Activated T-helper 1 cell treated with anti-CD3 and anti-CD28 coated beads, Interleukin-12 subunit alpha, Interleukin-12 subunit beta, Interleukin-2, Interleukin-4 antibody, amounts not matched to agents 30 ng/mL and 10 ng/mL and 1 ng/mL, durations not matched to agents 14 hours and 24 hours and 36 hours (primary cell): ENCODE measurements at regions of chr4 and their contacts with region 1.

Region 1: GRCh38 chr4:16026160-16026761 is 57.6 kb downstream of the PROM1 start:
- DNase-seq: peak; percentile 5
- H3K4me3 Mint-ChIP-seq: no peak overlapping the region
- H3K27ac Mint-ChIP-seq: no peak overlapping the region
- H3K4me1 Mint-ChIP-seq: no peaks in the 10 kb centered on the region
- H3K27me3 Mint-ChIP-seq: peaks cover 16% of the 10 kb centered on the region

Region 2: GRCh38 chr4:16199093-16199492 is 172.8 kb after region 1 on chr4:
- intact Hi-C with region 1: loop called (anchors 1 kb)
- DNase-seq: no peak
- H3K4me3 Mint-ChIP-seq: no peak overlapping the region
- H3K27ac Mint-ChIP-seq: no peak overlapping the region
- H3K4me1 Mint-ChIP-seq: peaks cover 25% of the 10 kb centered on the region
- H3K27me3 Mint-ChIP-seq: no peaks in the 10 kb centered on the region

Region 3: GRCh38 chr4:16264798-16265197 is 238.5 kb after region 1 on chr4:
- intact Hi-C with region 1: loop called (anchors 1 kb)
- DNase-seq: no peak
- H3K4me3 Mint-ChIP-seq: no peak overlapping the region
- H3K27ac Mint-ChIP-seq: no peak overlapping the region
- H3K4me1 Mint-ChIP-seq: no peaks in the 10 kb centered on the region
- H3K27me3 Mint-ChIP-seq: no peaks in the 10 kb centered on the region

Region 4: GRCh38 chr4:16344853-16345252 is 318.6 kb after region 1 on chr4:
- intact Hi-C with region 1: no loop called
- DNase-seq: no peak
- H3K4me3 Mint-ChIP-seq: no peak overlapping the region
- H3K27ac Mint-ChIP-seq: no peak overlapping the region
- H3K4me1 Mint-ChIP-seq: no peaks in the 10 kb centered on the region
- H3K27me3 Mint-ChIP-seq: peaks cover 3% of the 10 kb centered on the region

Region 5: GRCh38 chr4:16588651-16589050 is 562.4 kb after region 1 on chr4:
- intact Hi-C with region 1: no loop called
- DNase-seq: no peak
- H3K4me3 Mint-ChIP-seq: no peak overlapping the region
- H3K27ac Mint-ChIP-seq: no peak overlapping the region
- H3K4me1 Mint-ChIP-seq: no peaks in the 10 kb centered on the region
- H3K27me3 Mint-ChIP-seq: no peaks in the 10 kb centered on the region

Region 6: GRCh38 chr4:17447675-17448298 is 1421.5 kb after region 1 on chr4:
- intact Hi-C with region 1: loop called (anchors 10 kb)
- DNase-seq: peak; percentile 37
- H3K4me3 Mint-ChIP-seq: no peak overlapping the region
- H3K27ac Mint-ChIP-seq: no peak overlapping the region
- H3K4me1 Mint-ChIP-seq: no peaks in the 10 kb centered on the region
- H3K27me3 Mint-ChIP-seq: peaks cover 5% of the 10 kb centered on the region